ENCODE measurements at regions of chr1 and their contacts with region 1.

Region 1: DNA sequence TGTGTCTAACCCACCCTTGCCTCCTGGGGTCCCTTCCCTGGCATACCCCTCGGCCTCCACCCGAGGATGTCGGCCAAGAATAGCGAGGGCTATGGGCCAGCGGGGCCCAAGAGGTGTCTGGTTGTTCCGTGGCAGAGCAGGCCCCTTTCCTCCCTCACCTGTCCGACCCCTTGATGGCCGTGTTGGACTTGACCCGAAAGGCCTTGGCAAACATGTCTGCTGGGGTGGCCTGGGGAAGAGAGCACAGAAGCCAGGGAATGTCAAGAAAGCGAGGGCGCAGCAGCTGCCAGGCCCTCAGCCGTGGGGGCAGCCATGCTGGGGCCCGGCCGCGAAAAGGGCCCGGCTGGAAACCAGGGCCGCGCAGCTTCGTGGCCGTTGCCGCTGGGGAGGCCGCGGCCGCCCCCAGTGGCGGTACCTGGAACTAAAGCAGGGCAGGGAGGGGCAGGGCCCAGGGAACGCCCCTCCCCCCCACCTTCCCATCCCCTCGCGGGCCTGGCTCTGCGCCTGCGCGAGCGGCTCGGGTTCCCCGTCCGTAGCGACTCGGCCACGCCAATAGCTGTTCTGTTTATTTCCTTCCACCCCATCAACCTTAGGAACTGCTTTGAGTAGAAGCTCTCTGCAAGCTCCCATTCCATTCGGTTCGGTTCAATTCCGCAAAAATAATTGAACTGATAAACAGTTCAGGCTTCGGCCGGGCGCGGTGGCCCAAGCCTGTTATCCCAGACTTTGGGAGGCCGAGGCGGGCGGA is at the start of gene EIF2D:
- DNase-seq: peak; percentile 99
- H3K4me3 Mint-ChIP-seq: peak within 1 kb of the TSS; percentile 88
- H3K27ac Mint-ChIP-seq: peak within 1 kb of the TSS; percentile 97
- H3K4me1 Mint-ChIP-seq: peaks cover 21% of the 10 kb centered on the region
- H3K27me3 Mint-ChIP-seq: no peaks in the 10 kb centered on the region
- CTCF ChIP-seq: peak; percentile 100
- total RNA-seq, gene EIF2D: 110 and 116 TPM in 2 replicates

Region 2: DNA sequence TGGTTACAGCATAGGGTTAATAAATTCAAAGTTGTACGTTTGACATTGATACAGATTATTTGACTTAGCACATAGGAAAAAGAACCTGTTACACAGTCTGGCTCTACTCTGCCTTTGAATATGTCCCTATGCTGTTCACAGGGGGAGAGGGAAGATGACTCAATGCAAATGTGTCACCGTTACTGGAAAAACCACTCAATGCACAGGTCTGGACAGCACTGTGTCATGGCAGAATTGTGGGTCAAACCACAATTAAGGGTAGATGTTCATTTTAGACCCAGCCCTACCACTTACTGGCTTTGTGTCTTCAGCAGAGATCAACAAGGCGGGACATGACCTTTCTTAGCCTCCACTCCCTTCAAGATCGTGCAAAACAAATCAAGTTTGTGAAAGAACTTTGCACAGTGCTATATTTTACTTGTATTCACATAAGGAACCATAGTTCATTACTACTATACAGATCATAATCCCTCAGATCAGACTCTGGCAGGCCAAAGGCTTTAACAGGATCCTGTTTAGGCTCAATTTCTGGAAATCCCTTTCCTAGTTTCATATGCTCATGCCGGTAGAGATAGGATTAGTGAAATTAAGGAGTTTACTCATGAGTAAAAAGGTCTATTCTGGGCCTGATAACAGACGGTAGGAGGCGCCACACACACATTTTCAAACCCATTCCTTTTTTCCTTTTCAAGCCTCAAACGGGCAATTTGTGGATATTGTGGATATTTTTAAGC is 22.1 kb before region 1 on chr1:
- CTCF ChIA-PET with region 1: interaction called, 20 read pairs
- POLR2A ChIA-PET with region 1: interaction called, 6 read pairs
- intact Hi-C with region 1: no loop called
- DNase-seq: peak; percentile 95
- H3K4me3 Mint-ChIP-seq: no peak overlapping the region
- H3K27ac Mint-ChIP-seq: peak overlapping the region; percentile 66
- H3K4me1 Mint-ChIP-seq: peaks cover 28% of the 10 kb centered on the region
- H3K27me3 Mint-ChIP-seq: no peaks in the 10 kb centered on the region
- CTCF ChIP-seq: peak; percentile 41

Region 3: DNA sequence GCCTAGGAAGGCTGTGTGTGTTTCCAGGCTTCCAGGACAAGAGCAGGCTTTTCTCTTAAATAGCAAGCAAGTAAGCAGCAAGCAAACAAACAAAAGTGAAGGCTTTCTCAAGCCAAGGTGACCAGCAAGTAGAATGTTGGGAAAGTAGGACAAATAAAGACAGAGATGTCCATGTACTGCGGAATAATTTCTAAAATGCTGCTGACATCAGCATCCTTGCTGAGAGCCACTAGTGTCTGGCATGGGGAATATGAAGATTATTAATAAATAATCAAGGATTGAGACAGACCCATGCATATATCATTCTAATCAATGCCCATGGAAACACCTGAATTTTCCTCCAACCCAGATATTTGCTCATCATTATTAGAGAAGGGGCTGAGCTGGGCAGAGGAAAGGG is 16.6 kb after region 1 on chr1:
- CTCF ChIA-PET with region 1: interaction called, 269 read pairs
- POLR2A ChIA-PET with region 1: interaction called, 215 read pairs
- intact Hi-C with region 1: loop called (anchors 1 kb)
- DNase-seq: no peak
- H3K4me3 Mint-ChIP-seq: no peak overlapping the region
- H3K27ac Mint-ChIP-seq: no peak overlapping the region
- H3K4me1 Mint-ChIP-seq: peaks cover 9% of the 10 kb centered on the region
- H3K27me3 Mint-ChIP-seq: peaks cover 12% of the 10 kb centered on the region
- CTCF ChIP-seq: no peak

Region 4: DNA sequence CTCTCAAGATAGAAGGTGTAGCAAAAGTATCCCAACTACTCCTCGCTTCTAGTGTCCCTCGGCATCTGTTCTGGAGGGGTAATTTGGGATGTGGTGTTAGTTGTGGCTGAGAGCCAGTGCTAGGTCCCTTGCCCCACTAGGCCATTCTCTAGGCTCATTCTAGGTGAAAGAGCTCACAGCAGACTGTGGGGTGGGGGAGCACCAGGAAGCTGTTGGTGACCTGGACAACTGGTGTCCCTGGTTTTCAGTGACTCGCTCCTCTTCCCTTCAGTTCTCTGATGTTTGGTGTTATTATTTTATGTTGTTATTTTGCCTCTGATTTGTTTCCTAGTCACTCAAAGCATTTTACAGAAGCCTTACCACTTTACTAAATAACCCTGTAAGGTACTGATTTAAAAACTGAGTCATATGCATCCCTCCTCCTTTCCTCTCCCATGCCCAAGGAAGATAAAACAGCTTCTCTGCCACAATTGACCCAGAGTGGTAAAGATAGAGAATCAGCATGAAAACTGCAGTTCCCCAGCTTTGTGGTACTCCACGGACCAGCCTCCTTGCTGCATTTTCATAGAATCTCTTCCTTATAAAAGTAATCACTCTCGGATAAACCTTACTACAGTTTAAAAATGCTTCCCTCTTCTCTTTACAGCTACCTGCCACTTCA is 37.1 kb after region 1 on chr1:
- CTCF ChIA-PET with region 1: interaction called, 10 read pairs
- POLR2A ChIA-PET with region 1: interaction called, 5 read pairs
- intact Hi-C with region 1: no loop called
- DNase-seq: no peak
- H3K4me3 Mint-ChIP-seq: no peak overlapping the region
- H3K27ac Mint-ChIP-seq: no peak overlapping the region
- H3K4me1 Mint-ChIP-seq: peaks cover 16% of the 10 kb centered on the region
- H3K27me3 Mint-ChIP-seq: no peaks in the 10 kb centered on the region
- CTCF ChIP-seq: no peak

Region 5: DNA sequence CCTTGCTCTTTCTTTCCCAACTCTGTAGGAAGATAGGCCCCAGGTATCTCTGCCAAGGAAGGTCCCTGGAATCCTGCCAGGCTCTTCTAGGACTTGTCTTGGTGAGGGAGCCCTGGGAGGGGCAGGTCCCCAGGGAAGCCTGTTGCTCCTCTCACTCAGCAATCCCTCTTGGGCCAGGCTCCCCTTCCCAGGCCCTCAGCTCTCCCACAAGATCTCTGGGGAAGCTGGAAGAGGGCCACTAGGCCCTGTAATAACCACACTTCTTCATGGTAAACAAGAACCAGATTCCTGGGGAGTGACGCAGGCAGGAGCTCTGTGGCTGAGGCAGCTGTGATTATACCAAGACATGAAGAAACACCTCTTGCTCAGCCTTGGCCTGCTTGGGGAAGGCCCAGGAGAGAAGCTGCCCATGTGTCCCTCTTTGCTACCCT is 62.5 kb after region 1 on chr1:
- CTCF ChIA-PET with region 1: interaction called, 12 read pairs
- POLR2A ChIA-PET with region 1: interaction called, 9 read pairs
- intact Hi-C with region 1: no loop called
- DNase-seq: peak; percentile 100
- H3K4me3 Mint-ChIP-seq: peak overlapping the region; percentile 48
- H3K27ac Mint-ChIP-seq: no peak overlapping the region
- H3K4me1 Mint-ChIP-seq: peaks cover 18% of the 10 kb centered on the region
- H3K27me3 Mint-ChIP-seq: no peaks in the 10 kb centered on the region
- CTCF ChIP-seq: no peak